Activated CD4-positive, alpha-beta memory T cell treated with anti-CD3 and anti-CD28 coated beads, Interleukin-2, amount 10 ng/mL, durations not matched to agents 7 days and 5 days (primary cell): ENCODE measurements at regions of chr19 and their contacts with region 1.

Region 1: DNA sequence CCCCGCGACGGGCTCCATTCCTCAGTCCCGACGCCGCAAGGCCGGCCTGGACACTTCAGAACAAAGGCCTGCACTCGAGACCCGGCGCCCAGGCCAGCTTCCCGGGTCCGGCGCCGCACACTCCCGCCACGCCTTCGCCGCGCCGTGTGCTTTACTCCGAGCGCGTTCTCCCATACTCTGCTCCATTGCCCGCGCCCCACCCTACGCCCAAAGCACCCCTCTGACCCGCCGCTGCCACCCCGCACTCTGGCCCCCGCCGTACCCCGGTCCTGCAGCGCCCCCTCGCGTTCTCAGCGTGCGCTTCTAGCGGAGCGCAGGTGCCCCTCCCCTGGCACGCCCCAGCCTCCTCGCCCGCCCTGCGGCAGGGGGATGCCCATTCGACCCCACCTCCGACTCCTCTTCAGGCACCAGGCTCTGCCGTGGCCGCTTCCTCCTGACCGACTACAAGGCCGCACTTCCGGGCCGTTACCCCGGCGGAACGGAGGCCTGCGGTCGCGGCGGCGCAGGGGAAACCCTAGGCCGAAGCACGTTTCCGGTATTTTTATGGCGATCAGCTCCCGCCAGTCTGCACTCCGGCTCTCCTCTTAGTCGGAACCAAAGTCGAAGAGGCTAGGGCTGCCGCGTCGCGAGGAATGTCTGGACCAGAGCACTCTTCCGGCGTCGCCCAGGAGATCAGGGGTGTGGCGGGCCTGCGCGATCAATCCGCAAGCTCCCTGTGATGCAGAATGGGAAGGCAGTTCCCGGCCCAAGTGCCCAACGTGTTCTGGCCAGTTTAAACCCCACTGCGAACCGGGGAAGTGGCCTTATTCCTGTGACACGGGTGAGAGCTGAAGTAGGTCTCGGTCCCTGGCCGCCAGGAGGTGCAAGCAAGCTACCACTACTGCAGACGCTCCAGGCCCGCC is at the start of gene ZBTB45:
- DNase-seq: peak; percentile 92
- H3K4me3 Mint-ChIP-seq: peak within 1 kb of the TSS; percentile 94
- H3K27ac Mint-ChIP-seq: peak within 1 kb of the TSS; percentile 99
- H3K4me1 Mint-ChIP-seq: peaks cover 46% of the 10 kb centered on the region
- H3K27me3 Mint-ChIP-seq: no peaks in the 10 kb centered on the region
- total RNA-seq, gene ZBTB45: 15.8 to 17.4 TPM

Region 2: GRCh38 chr19:58326914-58327726 is 192.5 kb before region 1 on chr19 and contains the start of gene ZSCAN22:
- CTCF ChIA-PET with region 1: interaction called, 12 read pairs
- POLR2A ChIA-PET with region 1: interaction called, 8 read pairs
- DNase-seq: peak; percentile 93
- H3K4me3 Mint-ChIP-seq: no peak within 1 kb of the TSS
- H3K27ac Mint-ChIP-seq: no peak within 1 kb of the TSS
- H3K4me1 Mint-ChIP-seq: no peaks in the 10 kb centered on the region
- H3K27me3 Mint-ChIP-seq: no peaks in the 10 kb centered on the region
- total RNA-seq, gene ZSCAN22: 5.4 to 5.7 TPM

Region 3: DNA sequence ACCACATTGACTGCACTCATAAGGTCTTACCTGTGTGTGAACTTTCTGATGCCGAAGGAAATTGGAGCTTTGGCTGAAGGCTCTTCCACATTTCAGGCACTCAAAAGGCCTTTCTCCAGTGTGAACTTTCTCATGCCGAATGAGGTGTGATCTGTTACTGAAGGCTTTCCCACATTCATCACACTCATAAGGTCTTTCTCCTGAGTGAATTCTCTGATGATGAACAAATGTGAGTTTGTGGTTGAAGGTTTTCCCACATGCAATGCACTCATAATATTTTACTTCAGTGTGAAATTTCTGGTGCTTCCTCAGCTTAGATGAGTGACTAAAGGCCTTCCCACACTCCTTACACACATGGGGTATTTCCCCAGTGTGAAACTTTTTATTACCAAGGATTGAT is 85.4 kb before region 1 on chr19:
- CTCF ChIA-PET with region 1: no interaction called
- POLR2A ChIA-PET with region 1: no interaction called
- DNase-seq: no peak
- H3K4me3 Mint-ChIP-seq: no peak overlapping the region
- H3K27ac Mint-ChIP-seq: no peak overlapping the region
- H3K4me1 Mint-ChIP-seq: peaks cover 13% of the 10 kb centered on the region
- H3K27me3 Mint-ChIP-seq: no peaks in the 10 kb centered on the region

Region 4: GRCh38 chr19:58499021-58499927 is 20.3 kb before region 1 on chr19:
- CTCF ChIA-PET with region 1: interaction called, 15 read pairs
- POLR2A ChIA-PET with region 1: interaction called, 13 read pairs
- DNase-seq: peak; percentile 99
- H3K4me3 Mint-ChIP-seq: peak overlapping the region; percentile 93
- H3K27ac Mint-ChIP-seq: peak overlapping the region; percentile 81
- H3K4me1 Mint-ChIP-seq: peaks cover 33% of the 10 kb centered on the region
- H3K27me3 Mint-ChIP-seq: no peaks in the 10 kb centered on the region

Region 5: DNA sequence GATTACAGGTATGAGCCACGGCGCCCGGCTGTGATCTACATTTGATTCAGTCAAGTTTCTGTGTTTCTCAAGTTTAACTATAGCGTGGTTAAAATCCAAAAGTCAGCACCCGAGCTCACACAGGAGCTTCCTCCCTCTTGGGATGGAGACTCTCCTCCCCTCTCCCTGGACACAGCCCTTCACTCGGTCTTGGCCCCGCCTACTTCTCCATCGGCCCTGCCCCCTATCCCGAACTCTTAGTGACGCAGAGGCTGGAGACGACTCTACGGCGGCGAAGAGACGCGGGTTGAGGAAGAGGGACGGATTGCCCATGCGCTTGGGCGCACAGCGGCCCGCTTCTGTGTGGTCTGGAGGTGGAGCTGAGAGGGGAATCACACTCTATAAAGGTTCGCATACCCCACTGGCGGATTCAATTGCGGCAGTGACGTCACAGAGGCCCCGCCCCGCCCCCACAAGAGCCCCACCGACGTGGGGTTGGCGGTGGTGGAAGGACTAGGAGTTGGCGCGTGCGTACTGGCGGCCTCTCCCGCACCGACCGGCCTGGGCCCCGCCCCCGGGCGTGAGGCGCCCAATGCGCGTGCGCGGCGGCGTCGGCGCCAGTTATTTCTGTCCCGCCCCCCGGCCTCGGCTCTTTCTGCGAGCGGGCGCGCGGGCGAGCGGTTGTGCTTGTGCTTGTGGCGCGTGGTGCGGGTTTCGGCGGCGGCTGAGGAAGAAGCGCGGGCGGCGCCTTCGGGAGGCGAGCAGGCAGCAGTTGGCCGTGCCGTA is 24.4 kb after region 1 on chr19 and contains the start of gene TRIM28:
- CTCF ChIA-PET with region 1: interaction called, 14 read pairs
- POLR2A ChIA-PET with region 1: interaction called, 57 read pairs
- DNase-seq: peak; percentile 100
- H3K4me3 Mint-ChIP-seq: peak within 1 kb of the TSS; percentile 96
- H3K27ac Mint-ChIP-seq: peak within 1 kb of the TSS; percentile 98
- H3K4me1 Mint-ChIP-seq: peaks cover 40% of the 10 kb centered on the region
- H3K27me3 Mint-ChIP-seq: peaks cover 11% of the 10 kb centered on the region
- total RNA-seq, gene TRIM28: 345 TPM

Region 6: GRCh38 chr19:58572818-58573657 is 53.4 kb after region 1 on chr19 and contains the start of gene MZF1:
- CTCF ChIA-PET with region 1: interaction called, 49 read pairs
- POLR2A ChIA-PET with region 1: interaction called, 30 read pairs
- DNase-seq: peak; percentile 100
- H3K4me3 Mint-ChIP-seq: peak within 1 kb of the TSS; percentile 83
- H3K27ac Mint-ChIP-seq: peak within 1 kb of the TSS; percentile 97
- H3K4me1 Mint-ChIP-seq: peaks cover 52% of the 10 kb centered on the region
- H3K27me3 Mint-ChIP-seq: no peaks in the 10 kb centered on the region
- total RNA-seq, gene MZF1: 21.6 to 22.9 TPM